CD4-positive, alpha-beta T cell (primary cell): ENCODE measurements at regions of chr2 and their contacts with region 1.

Region 1: DNA sequence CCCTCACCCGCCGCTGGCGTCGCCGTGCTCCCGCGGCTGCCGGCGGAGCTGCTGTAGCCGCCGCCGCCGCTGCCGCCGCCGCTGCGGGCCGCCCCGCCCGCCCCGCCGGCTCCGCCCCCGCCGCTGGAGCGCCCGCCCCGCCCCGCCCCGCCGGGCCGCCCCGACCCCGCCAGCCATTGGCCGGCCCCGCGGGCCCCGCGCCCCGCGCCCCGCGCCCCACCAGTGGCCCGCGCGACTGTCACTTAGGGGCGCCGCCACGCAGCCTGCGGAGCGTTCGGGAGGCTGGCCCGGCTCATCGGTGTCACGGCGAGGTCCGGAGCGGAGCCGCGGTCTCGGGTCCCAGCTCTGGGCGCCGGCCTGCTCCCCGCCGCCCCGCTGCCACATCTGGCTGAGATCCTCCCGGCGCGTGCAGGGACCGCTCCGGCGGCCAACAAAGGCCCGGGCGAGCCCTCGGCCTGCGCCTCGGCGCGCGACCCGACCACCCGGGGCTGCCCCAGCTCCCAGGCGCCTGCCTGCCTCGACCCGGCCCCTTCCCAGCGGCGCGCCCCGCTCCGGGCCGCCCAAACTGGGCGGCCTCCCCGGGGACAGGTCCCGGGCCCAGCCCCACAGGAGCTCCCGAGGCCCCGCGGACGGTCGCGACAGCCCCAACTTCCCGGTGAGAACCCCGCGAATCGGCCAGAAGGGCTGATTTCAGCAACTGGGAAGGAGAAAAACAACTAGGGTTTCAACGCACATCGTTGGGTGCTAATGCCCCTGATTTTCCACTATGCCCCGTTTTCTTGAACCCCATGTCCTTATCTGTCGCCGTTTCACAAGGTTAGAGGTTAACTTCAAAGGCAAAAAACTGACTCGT is at the start of gene MGAT4A:
- DNase-seq: peak; percentile 65 to 91 (median 76)
- ATAC-seq: peak; percentile 70
- H3K4me3 ChIP-seq: peak within 1 kb of the TSS; percentile 87
- H3K4me3 Mint-ChIP-seq: peak within 1 kb of the TSS; percentile 99
- H3K27ac ChIP-seq: peak within 1 kb of the TSS; percentile 77 to 91
- H3K27ac Mint-ChIP-seq: peak within 1 kb of the TSS; percentile 100
- H3K4me1 ChIP-seq: peaks cover 50% of the 10 kb centered on the region
- H3K4me1 Mint-ChIP-seq: peaks cover 80% of the 10 kb centered on the region
- H3K27me3 ChIP-seq: no peaks in the 10 kb centered on the region
- H3K27me3 Mint-ChIP-seq: peaks cover 4% of the 10 kb centered on the region
- CTCF ChIP-seq: no peak
- total RNA-seq, gene MGAT4A: 200 to 204 TPM

Region 2: GRCh38 chr2:98465456-98466226 is 265.6 kb before region 1 on chr2:
- CTCF ChIA-PET with region 1: no interaction called
- POLR2A ChIA-PET with region 1: interaction called, 3 read pairs
- intact Hi-C with region 1: loop called in 1 of 2 experiments (anchors 10 kb)
- DNase-seq: peak; percentile 62 to 94 (median 89)
- ATAC-seq: peak; percentile 71
- H3K4me3 ChIP-seq: peak overlapping the region; percentile 40
- H3K4me3 Mint-ChIP-seq: peak overlapping the region; percentile 89
- H3K27ac ChIP-seq: peak overlapping the region; percentile 79 to 87
- H3K27ac Mint-ChIP-seq: peak overlapping the region; percentile 95
- H3K4me1 ChIP-seq: peaks cover 95% of the 10 kb centered on the region
- H3K4me1 Mint-ChIP-seq: peaks cover 90% of the 10 kb centered on the region
- H3K27me3 ChIP-seq: no peaks in the 10 kb centered on the region
- H3K27me3 Mint-ChIP-seq: no peaks in the 10 kb centered on the region
- CTCF ChIP-seq: no peak

Region 3: DNA sequence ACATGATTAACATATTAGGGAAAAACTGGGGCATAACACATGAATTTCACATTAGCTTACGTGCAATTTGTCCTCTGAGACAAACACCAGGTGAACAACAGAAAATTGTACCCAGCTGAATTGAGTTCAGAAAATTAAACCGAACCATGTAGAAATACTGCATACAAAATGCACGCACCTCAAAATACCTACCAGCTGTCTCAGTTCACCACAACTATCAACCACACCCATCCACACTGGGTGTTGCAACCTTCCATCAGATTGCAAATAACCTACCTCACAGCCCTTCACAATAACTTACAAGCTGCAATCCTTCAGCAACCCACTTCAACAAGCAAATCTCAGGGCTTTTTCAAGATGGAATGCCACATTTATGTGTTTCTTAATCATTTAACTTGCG is 66.9 kb before region 1 on chr2:
- CTCF ChIA-PET with region 1: no interaction called
- POLR2A ChIA-PET with region 1: interaction called, 141 read pairs
- intact Hi-C with region 1: loop called in 1 of 2 experiments (anchors 2 kb)
- DNase-seq: peak in 11 of 14 experiments; percentile 39 to 85 (median 52)
- ATAC-seq: peak; percentile 78
- H3K4me3 ChIP-seq: peak overlapping the region; percentile 44
- H3K4me3 Mint-ChIP-seq: peak overlapping the region; percentile 87
- H3K27ac ChIP-seq: peak overlapping the region; percentile 58 to 76
- H3K27ac Mint-ChIP-seq: peak overlapping the region; percentile 92
- H3K4me1 ChIP-seq: peaks cover 44% of the 10 kb centered on the region
- H3K4me1 Mint-ChIP-seq: peaks cover 78% of the 10 kb centered on the region
- H3K27me3 ChIP-seq: no peaks in the 10 kb centered on the region
- H3K27me3 Mint-ChIP-seq: no peaks in the 10 kb centered on the region
- CTCF ChIP-seq: no peak

Region 4: GRCh38 chr2:98702127-98702802 is 29.0 kb before region 1 on chr2:
- CTCF ChIA-PET with region 1: interaction called, 7 read pairs
- POLR2A ChIA-PET with region 1: interaction called, 14 read pairs
- intact Hi-C with region 1: no loop called
- DNase-seq: no peak
- ATAC-seq: peak; percentile 46
- H3K4me3 ChIP-seq: no peak overlapping the region
- H3K4me3 Mint-ChIP-seq: peak overlapping the region; percentile 56
- H3K27ac ChIP-seq: peak overlapping the region; percentile 20 to 42
- H3K27ac Mint-ChIP-seq: peak overlapping the region; percentile 81
- H3K4me1 ChIP-seq: peaks cover 67% of the 10 kb centered on the region
- H3K4me1 Mint-ChIP-seq: peaks cover 84% of the 10 kb centered on the region
- H3K27me3 ChIP-seq: no peaks in the 10 kb centered on the region
- H3K27me3 Mint-ChIP-seq: no peaks in the 10 kb centered on the region
- CTCF ChIP-seq: no peak

Region 5: DNA sequence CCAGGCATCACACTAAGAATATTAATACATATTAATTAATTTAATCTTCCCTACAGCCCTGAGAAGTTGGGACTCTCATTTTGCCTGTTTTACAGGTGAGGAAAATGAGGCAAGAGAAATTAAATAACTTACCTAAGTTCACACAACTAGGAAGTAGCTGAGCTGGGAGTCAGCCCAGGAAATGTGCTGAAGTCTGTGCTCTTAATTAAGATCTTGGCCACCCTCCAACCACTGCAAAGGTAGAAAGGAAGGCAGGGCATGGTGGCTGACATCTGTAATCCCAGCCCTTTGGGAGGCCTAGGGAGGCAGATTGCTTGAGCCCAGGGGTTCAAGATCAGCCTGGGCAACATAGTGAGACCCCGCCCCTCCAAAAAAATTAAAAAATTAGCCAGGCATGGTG is 12.6 kb after region 1 on chr2:
- CTCF ChIA-PET with region 1: interaction called, 3 read pairs
- POLR2A ChIA-PET with region 1: interaction called, 20 read pairs
- intact Hi-C with region 1: no loop called
- DNase-seq: peak in 1 of 14 experiments; percentile 57
- ATAC-seq: peak; percentile 59
- H3K4me3 ChIP-seq: no peak overlapping the region
- H3K4me3 Mint-ChIP-seq: no peak overlapping the region
- H3K27ac ChIP-seq: no peak overlapping the region
- H3K27ac Mint-ChIP-seq: peak overlapping the region; percentile 49
- H3K4me1 ChIP-seq: peaks cover 44% of the 10 kb centered on the region
- H3K4me1 Mint-ChIP-seq: peaks cover 77% of the 10 kb centered on the region
- H3K27me3 ChIP-seq: no peaks in the 10 kb centered on the region
- H3K27me3 Mint-ChIP-seq: no peaks in the 10 kb centered on the region
- CTCF ChIP-seq: no peak

Region 6: GRCh38 chr2:98771721-98772524 is 40.7 kb after region 1 on chr2:
- CTCF ChIA-PET with region 1: interaction called, 43 read pairs
- POLR2A ChIA-PET with region 1: interaction called, 414 read pairs
- intact Hi-C with region 1: loop called (anchors 1 to 2 kb)
- DNase-seq: peak; percentile 45 to 92 (median 64)
- ATAC-seq: peak; percentile 70
- H3K4me3 ChIP-seq: peak overlapping the region; percentile 60
- H3K4me3 Mint-ChIP-seq: peak overlapping the region; percentile 94
- H3K27ac ChIP-seq: peak overlapping the region; percentile 86 to 90
- H3K27ac Mint-ChIP-seq: peak overlapping the region; percentile 96
- H3K4me1 ChIP-seq: peaks cover 86% of the 10 kb centered on the region
- H3K4me1 Mint-ChIP-seq: peaks cover 84% of the 10 kb centered on the region
- H3K27me3 ChIP-seq: no peaks in the 10 kb centered on the region
- H3K27me3 Mint-ChIP-seq: no peaks in the 10 kb centered on the region
- CTCF ChIP-seq: no peak

Region 7: DNA sequence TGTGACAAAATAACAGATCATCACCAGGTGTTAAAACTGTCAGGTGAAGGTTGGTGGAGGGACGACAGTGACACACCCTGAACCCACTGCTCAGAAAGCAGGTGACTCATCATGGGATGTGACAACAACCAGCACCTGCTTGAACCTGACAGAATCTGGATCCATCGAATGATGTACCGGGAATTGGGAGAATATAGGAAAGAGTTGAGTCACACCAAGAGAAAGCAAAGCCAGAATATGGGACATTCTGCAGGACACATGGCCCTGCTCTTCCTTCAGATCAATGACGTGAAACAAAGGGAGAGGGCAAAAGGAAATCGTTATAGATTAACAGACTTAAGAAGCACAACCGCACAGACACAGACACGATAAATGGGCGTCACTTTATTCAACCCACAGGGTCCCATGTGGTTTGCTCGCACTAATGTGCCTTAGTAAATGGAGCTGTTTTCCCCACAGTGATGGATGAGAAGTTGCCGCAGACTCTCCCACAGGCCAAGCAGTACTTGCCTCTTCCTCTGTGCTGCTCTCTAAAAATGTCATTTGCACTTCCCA is 104.6 kb after region 1 on chr2:
- CTCF ChIA-PET with region 1: interaction called, 10 read pairs
- POLR2A ChIA-PET with region 1: interaction called, 18 read pairs
- intact Hi-C with region 1: loop called (anchors 2 kb)
- DNase-seq: peak; percentile 36 to 88 (median 51)
- ATAC-seq: peak; percentile 85
- H3K4me3 ChIP-seq: no peak overlapping the region
- H3K4me3 Mint-ChIP-seq: peak overlapping the region; percentile 57
- H3K27ac ChIP-seq: peak overlapping the region; percentile 27 to 48
- H3K27ac Mint-ChIP-seq: peak overlapping the region; percentile 94
- H3K4me1 ChIP-seq: peaks cover 42% of the 10 kb centered on the region
- H3K4me1 Mint-ChIP-seq: peaks cover 46% of the 10 kb centered on the region
- H3K27me3 ChIP-seq: no peaks in the 10 kb centered on the region
- H3K27me3 Mint-ChIP-seq: no peaks in the 10 kb centered on the region
- CTCF ChIP-seq: no peak